ENCODE measurements at regions of chr11 and their contacts with region 1.

Region 1: GRCh38 chr11:75547580-75548058 is 14.4 kb upstream of the SERPINH1 start:
- DNase-seq: peak; percentile 61 to 72
- H3K4me3 ChIP-seq: no peak overlapping the region
- H3K27ac ChIP-seq: no peak overlapping the region
- H3K4me1 ChIP-seq: no peaks in the 10 kb centered on the region
- H3K27me3 ChIP-seq: no peaks in the 10 kb centered on the region
- CTCF ChIP-seq: peak; percentile 98

Region 2: DNA sequence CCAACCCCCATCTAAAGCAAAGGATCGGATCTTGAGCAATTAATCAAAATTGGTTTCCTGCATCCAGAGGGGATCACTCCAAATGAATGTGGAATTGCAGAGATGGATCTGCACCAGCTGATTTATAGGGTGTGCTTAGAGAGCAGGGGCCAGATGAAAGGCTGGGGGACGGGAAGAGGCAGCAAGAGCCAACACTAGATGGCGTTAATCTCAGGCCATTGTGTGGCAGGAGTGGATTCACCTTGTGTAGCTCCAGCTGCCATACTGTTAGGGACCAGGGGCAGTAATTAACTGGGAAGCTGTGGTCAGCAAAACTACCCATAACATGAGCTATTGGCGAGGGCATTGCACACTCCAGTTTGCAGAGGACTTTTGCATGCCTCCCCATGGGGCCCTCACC is 50.0 kb after region 1 on chr11:
- CTCF ChIA-PET with region 1: no interaction called
- POLR2A ChIA-PET with region 1: no interaction called
- intact Hi-C with region 1: no loop called
- DNase-seq: no peak
- H3K4me3 ChIP-seq: no peak overlapping the region
- H3K27ac ChIP-seq: no peak overlapping the region
- H3K4me1 ChIP-seq: no peaks in the 10 kb centered on the region
- H3K27me3 ChIP-seq: 0 out of 2 replicates have a peak, but pooled peaks cover 7% of the 10 kb centered on the region
- CTCF ChIP-seq: peak; percentile 69

Region 3: DNA sequence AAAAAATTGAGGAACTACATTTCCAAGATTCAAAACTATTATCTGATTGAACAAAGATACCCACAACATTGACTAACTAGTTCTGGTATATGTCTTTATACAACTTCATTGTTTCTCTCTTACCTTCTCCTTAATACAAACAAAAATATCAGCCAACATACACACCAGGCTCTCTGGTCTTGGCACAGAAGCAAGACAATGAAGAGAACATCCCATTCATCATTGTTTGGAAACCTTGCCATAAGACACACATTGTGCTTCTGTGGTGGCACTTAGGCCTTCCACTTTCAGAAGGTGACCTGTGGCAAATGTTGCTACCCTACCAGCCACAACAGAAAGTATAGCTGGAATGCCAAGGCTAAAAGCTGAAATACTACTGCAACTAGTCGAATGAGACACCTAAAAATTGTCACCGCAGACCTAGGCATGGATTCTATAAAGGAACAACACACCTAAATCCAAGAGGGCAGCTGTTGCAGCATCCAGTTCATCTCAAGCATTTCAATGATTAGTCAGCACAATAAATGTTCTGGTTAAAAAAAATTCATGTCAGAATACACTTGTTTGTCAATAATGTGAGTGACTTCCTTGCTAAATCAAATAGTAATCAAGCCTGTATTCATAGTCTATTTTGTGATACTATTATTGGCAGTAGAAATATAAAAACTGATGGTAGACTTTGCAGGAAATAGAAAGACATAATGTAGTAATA is 94.9 kb after region 1 on chr11:
- CTCF ChIA-PET with region 1: interaction called, 10 read pairs
- POLR2A ChIA-PET with region 1: no interaction called
- intact Hi-C with region 1: no loop called
- DNase-seq: no peak
- H3K4me3 ChIP-seq: no peak overlapping the region
- H3K27ac ChIP-seq: no peak overlapping the region
- H3K4me1 ChIP-seq: no peaks in the 10 kb centered on the region
- H3K27me3 ChIP-seq: no peaks in the 10 kb centered on the region
- CTCF ChIP-seq: no peak

Region 4: DNA sequence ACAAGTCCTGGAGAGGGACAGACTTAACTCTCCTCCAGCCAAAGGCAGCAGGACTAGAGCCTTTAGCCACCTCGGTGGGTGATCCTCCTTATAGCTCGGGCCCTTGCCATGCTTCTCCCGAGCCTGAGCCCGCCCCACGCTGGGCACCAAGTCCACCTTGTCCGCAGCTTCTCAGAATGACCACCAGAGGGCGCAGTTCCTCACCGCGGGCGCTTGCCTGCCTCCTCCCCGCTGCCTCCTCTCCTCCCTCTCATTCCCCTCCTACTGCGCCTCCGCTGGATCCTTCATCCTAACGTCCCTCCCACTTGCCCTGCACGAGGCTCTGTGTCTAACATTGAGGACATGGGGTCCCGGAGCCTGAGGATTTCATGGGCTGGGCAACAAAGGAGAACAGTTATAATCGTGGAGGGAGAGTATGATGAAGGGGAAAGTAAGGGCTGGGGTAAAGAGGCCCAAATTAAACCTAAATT is 158.7 kb after region 1 on chr11:
- CTCF ChIA-PET with region 1: no interaction called
- POLR2A ChIA-PET with region 1: no interaction called
- intact Hi-C with region 1: loop called (anchors 1 kb)
- DNase-seq: peak; percentile 57 to 64
- H3K4me3 ChIP-seq: no peak overlapping the region
- H3K27ac ChIP-seq: no peak overlapping the region
- H3K4me1 ChIP-seq: peaks cover 3% of the 10 kb centered on the region; the same call in 1 of the 2 replicates
- H3K27me3 ChIP-seq: no peaks in the 10 kb centered on the region
- CTCF ChIP-seq: peak; percentile 96

Region 5: GRCh38 chr11:75867775-75868374 is 320.3 kb after region 1 on chr11:
- CTCF ChIA-PET with region 1: interaction called, 14 read pairs
- POLR2A ChIA-PET with region 1: no interaction called
- intact Hi-C with region 1: loop called (anchors 1 kb)
- DNase-seq: peak; percentile 14 to 52
- H3K4me3 ChIP-seq: no peak overlapping the region
- H3K27ac ChIP-seq: no peak overlapping the region
- H3K4me1 ChIP-seq: peaks cover 19% of the 10 kb centered on the region
- H3K27me3 ChIP-seq: no peaks in the 10 kb centered on the region
- CTCF ChIP-seq: peak; percentile 95

Region 6: GRCh38 chr11:76225122-76225611 is 677.5 kb after region 1 on chr11:
- CTCF ChIA-PET with region 1: no interaction called
- POLR2A ChIA-PET with region 1: no interaction called
- intact Hi-C with region 1: no loop called
- DNase-seq: no peak
- H3K4me3 ChIP-seq: no peak overlapping the region
- H3K27ac ChIP-seq: no peak overlapping the region
- H3K4me1 ChIP-seq: no peaks in the 10 kb centered on the region
- H3K27me3 ChIP-seq: no peaks in the 10 kb centered on the region
- CTCF ChIP-seq: no peak

Region 7: GRCh38 chr11:76512851-76513653 is 965.4 kb after region 1 on chr11:
- CTCF ChIA-PET with region 1: no interaction called
- POLR2A ChIA-PET with region 1: no interaction called
- intact Hi-C with region 1: loop called (anchors 5 kb)
- DNase-seq: peak in 1 of 2 experiments; percentile 38
- H3K4me3 ChIP-seq: no peak overlapping the region
- H3K27ac ChIP-seq: 0 out of 2 replicates have a peak overlapping the region, but pooled peaks have one; percentile 8
- H3K4me1 ChIP-seq: no peaks in the 10 kb centered on the region
- H3K27me3 ChIP-seq: no peaks in the 10 kb centered on the region
- CTCF ChIP-seq: peak; percentile 69

Region 8: GRCh38 chr11:76680518-76681425 is 1133.2 kb after region 1 on chr11:
- CTCF ChIA-PET with region 1: no interaction called
- POLR2A ChIA-PET with region 1: no interaction called
- intact Hi-C with region 1: loop called (anchors 5 kb)
- DNase-seq: peak; percentile 54 to 68
- H3K4me3 ChIP-seq: no peak overlapping the region
- H3K27ac ChIP-seq: no peak overlapping the region
- H3K4me1 ChIP-seq: no peaks in the 10 kb centered on the region; the same call in 1 of the 2 replicates
- H3K27me3 ChIP-seq: no peaks in the 10 kb centered on the region
- CTCF ChIP-seq: peak; percentile 95